Panc1 (cell line): ENCODE measurements at regions of chr3 and their contacts with region 1.

Region 1: DNA sequence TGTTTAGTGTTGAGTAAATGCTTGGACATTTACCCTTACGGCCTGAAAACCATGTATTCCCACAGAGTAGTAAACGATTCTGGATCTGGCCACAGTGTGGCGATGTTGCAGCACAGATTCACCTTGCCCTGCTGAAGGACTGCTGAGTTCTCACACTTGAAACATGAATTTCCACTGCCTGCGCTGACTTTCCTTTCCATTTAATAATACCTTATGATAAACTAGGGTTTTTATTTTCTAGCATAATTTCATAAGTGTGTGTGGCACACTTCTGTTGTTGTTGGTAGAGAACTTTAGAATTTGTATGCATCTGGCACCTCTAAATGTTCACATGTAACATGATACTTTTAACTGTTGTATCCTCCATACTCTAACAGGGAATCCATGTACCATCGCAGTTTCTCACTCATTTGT is 53.9 kb downstream of the C3orf38 start:
- DNase-seq: peak; percentile 48
- ATAC-seq: peak; percentile 83
- H3K4me3 ChIP-seq: no peak overlapping the region
- H3K27ac ChIP-seq: no peak overlapping the region
- H3K4me1 ChIP-seq: no peaks in the 10 kb centered on the region
- H3K27me3 ChIP-seq: no peaks in the 10 kb centered on the region
- CTCF ChIP-seq: peak; percentile 80

Region 2: GRCh38 chr3:88462230-88462629 is 258.6 kb after region 1 on chr3:
- CTCF ChIA-PET with region 1: no interaction called
- POLR2A ChIA-PET with region 1: no interaction called
- in situ Hi-C with region 1: no loop called
- intact Hi-C with region 1: no loop called
- DNase-seq: no peak
- ATAC-seq: no peak
- H3K4me3 ChIP-seq: no peak overlapping the region
- H3K27ac ChIP-seq: no peak overlapping the region
- H3K4me1 ChIP-seq: no peaks in the 10 kb centered on the region
- H3K27me3 ChIP-seq: no peaks in the 10 kb centered on the region
- CTCF ChIP-seq: no peak

Region 3: GRCh38 chr3:89087851-89088250 is 884.2 kb after region 1 on chr3:
- CTCF ChIA-PET with region 1: no interaction called
- POLR2A ChIA-PET with region 1: no interaction called
- in situ Hi-C with region 1: no loop called
- intact Hi-C with region 1: no loop called
- DNase-seq: no peak
- ATAC-seq: no peak
- H3K4me3 ChIP-seq: no peak overlapping the region
- H3K27ac ChIP-seq: no peak overlapping the region
- H3K4me1 ChIP-seq: no peaks in the 10 kb centered on the region
- H3K27me3 ChIP-seq: no peaks in the 10 kb centered on the region
- CTCF ChIP-seq: no peak

Region 4: GRCh38 chr3:89113903-89114840 is 910.5 kb after region 1 on chr3:
- CTCF ChIA-PET with region 1: no interaction called
- POLR2A ChIA-PET with region 1: no interaction called
- in situ Hi-C with region 1: no loop called
- intact Hi-C with region 1: loop called (anchors 5 kb)
- DNase-seq: no peak
- ATAC-seq: peak; percentile 94
- H3K4me3 ChIP-seq: peak overlapping the region; percentile 45 to 55
- H3K27ac ChIP-seq: no peak overlapping the region
- H3K4me1 ChIP-seq: no peaks in the 10 kb centered on the region
- H3K27me3 ChIP-seq: 0 out of 2 replicates have a peak, but pooled peaks cover 4% of the 10 kb centered on the region
- CTCF ChIP-seq: peak; percentile 84

Region 5: DNA sequence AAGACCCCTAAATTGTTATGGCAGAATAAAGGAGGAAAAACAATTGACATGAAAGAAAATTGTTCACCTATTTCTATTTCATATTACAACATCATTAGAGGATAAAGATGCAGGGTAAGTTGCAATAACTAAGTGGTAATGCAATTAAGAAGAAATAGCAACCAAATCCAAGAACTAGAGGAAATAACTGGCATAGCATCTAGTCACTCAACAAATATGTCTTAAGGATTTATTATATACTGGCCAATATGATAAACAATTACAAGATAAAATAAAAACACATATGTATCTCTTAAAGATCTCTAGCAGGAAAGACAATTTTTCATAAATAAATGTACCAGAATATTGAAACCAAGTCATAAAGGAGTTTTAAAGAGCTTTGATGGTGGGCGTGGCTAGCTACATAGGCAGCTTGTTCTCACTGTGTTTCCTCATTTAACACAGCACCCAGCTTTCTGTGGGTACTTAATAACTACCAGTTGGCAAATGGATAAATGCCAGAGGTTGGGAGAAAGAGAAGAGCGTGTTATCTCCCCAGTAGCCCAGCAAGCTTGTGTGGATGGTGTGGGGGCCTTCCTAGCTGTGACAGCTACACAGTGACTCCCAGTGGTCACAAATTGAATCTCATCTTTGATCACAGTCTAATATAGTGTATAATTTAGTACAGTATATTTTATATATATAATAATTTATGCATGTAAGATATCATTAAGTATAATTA is 1887.7 kb after region 1 on chr3:
- CTCF ChIA-PET with region 1: no interaction called
- POLR2A ChIA-PET with region 1: no interaction called
- in situ Hi-C with region 1: no loop called
- intact Hi-C with region 1: loop called (anchors 5 kb)
- DNase-seq: no peak
- ATAC-seq: peak; percentile 78; the same call in 1 of the 2 replicates
- H3K4me3 ChIP-seq: no peak overlapping the region
- H3K27ac ChIP-seq: no peak overlapping the region
- H3K4me1 ChIP-seq: no peaks in the 10 kb centered on the region
- H3K27me3 ChIP-seq: no peaks in the 10 kb centered on the region
- CTCF ChIP-seq: peak; percentile 61

Region 6: DNA sequence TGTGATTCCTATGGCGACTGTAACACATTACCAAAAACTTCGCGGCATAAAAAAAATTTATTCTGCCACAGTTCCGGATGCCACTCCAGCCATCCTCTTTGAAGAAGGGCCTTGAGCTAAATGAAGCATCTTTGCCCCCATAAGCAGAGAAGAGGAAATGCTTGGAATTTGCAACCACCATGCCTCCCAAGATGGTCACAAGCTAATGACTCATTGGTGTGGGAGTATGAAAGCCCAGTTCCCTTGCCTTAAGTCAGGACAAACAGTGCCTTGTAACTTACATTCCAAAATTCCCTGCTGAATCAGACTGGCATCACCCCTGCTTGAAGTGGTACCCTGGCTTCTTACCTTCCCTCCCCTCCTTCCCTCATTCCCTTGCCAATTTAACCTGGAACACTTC is 1981.2 kb after region 1 on chr3:
- CTCF ChIA-PET with region 1: no interaction called
- POLR2A ChIA-PET with region 1: no interaction called
- in situ Hi-C with region 1: no loop called
- intact Hi-C with region 1: loop called (anchors 10 kb)
- DNase-seq: no peak
- ATAC-seq: no peak
- H3K4me3 ChIP-seq: no peak overlapping the region
- H3K27ac ChIP-seq: no peak overlapping the region
- H3K4me1 ChIP-seq: no peaks in the 10 kb centered on the region
- H3K27me3 ChIP-seq: no peaks in the 10 kb centered on the region
- CTCF ChIP-seq: no peak